PC-3 (cell line): ENCODE measurements at regions of chr2 and their contacts with region 1.

Region 1: GRCh38 chr2:239035361-239036078 is 187.6 kb downstream of the TWIST2 start:
- DNase-seq: peak; percentile 57
- ATAC-seq: peak; percentile 92
- H3K4me3 ChIP-seq: no peak overlapping the region
- H3K27ac ChIP-seq: no peak overlapping the region
- H3K4me1 ChIP-seq: no peaks in the 10 kb centered on the region
- H3K27me3 ChIP-seq: peaks cover 8% of the 10 kb centered on the region; the same call in 1 of the 2 replicates
- CTCF ChIP-seq: peak; percentile 64

Region 2: GRCh38 chr2:238985871-238986446 is 49.6 kb before region 1 on chr2:
- CTCF ChIA-PET with region 1: no interaction called
- POLR2A ChIA-PET with region 1: no interaction called
- intact Hi-C with region 1: no loop called
- DNase-seq: no peak
- ATAC-seq: no peak
- H3K4me3 ChIP-seq: no peak overlapping the region
- H3K27ac ChIP-seq: no peak overlapping the region
- H3K4me1 ChIP-seq: no peaks in the 10 kb centered on the region
- H3K27me3 ChIP-seq: no peaks in the 10 kb centered on the region
- CTCF ChIP-seq: no peak

Region 3: GRCh38 chr2:239106314-239106908 is 70.9 kb after region 1 on chr2:
- CTCF ChIA-PET with region 1: no interaction called
- POLR2A ChIA-PET with region 1: no interaction called
- intact Hi-C with region 1: loop called (anchors 1 kb)
- DNase-seq: peak; percentile 80
- ATAC-seq: peak; percentile 96
- H3K4me3 ChIP-seq: no peak overlapping the region
- H3K27ac ChIP-seq: no peak overlapping the region
- H3K4me1 ChIP-seq: no peaks in the 10 kb centered on the region
- H3K27me3 ChIP-seq: no peaks in the 10 kb centered on the region
- CTCF ChIP-seq: peak; percentile 79